ENCODE measurements at regions of chr6 and their contacts with region 1.

Region 1: GRCh38 chr6:150079604-150080003 is 10.7 kb upstream of the ULBP3 start:
- DNase-seq: peak in 8 of 9 donors; percentile 16 to 59 (median 46)
- ATAC-seq: peak; percentile 59
- H3K4me3 ChIP-seq: no peak overlapping the region
- H3K4me3 Mint-ChIP-seq: peak overlapping the region in 9 of 10 donors; percentile 51 to 82 (median 71)
- H3K27ac ChIP-seq: no peak overlapping the region
- H3K27ac Mint-ChIP-seq: peak overlapping the region in 3 of 9 donors; percentile 18 to 83 (median 69)
- H3K4me1 ChIP-seq: peaks cover 7 to 16% of the 10 kb centered on the region in 2 donors
- H3K4me1 Mint-ChIP-seq: peaks cover 9 to 28% (median 23%) of the 10 kb centered on the region in 7 donors
- H3K27me3 ChIP-seq: no peaks in the 10 kb centered on the region
- H3K27me3 Mint-ChIP-seq: peaks cover 11 to 36% (median 17%) of the 10 kb centered on the region in 5 donors

Region 2: GRCh38 chr6:150068720-150069648 is 10.6 kb before region 1 on chr6 and contains the start of gene ULBP3:
- CTCF ChIA-PET with region 1: interaction called, 3 read pairs
- POLR2A ChIA-PET with region 1: no interaction called
- intact Hi-C with region 1: loop called in 1 of 2 experiments (anchors 1 kb)
- DNase-seq: peak; percentile 24 to 75 (median 35)
- ATAC-seq: peak; percentile 83
- H3K4me3 ChIP-seq: peak within 1 kb of the TSS; percentile 77
- H3K4me3 Mint-ChIP-seq: peak within 1 kb of the TSS; percentile 80 to 95 (median 90)
- H3K27ac ChIP-seq: no peak within 1 kb of the TSS
- H3K27ac Mint-ChIP-seq: peak within 1 kb of the TSS in 4 of 9 donors; percentile 49 to 82 (median 72)
- H3K4me1 ChIP-seq: peaks cover 0 to 5% of the 10 kb centered on the region in 2 donors
- H3K4me1 Mint-ChIP-seq: peaks cover 10 to 22% (median 14%) of the 10 kb centered on the region in 7 donors
- H3K27me3 ChIP-seq: no peaks in the 10 kb centered on the region
- H3K27me3 Mint-ChIP-seq: peaks cover 4 to 35% (median 12%) of the 10 kb centered on the region in 5 donors
- total RNA-seq, gene ULBP3: 0.42 to 1.5 TPM in 2 of 5 experiments, not detected in the others

Region 3: GRCh38 chr6:150334790-150335783 is 255.5 kb after region 1 on chr6:
- CTCF ChIA-PET with region 1: no interaction called
- POLR2A ChIA-PET with region 1: no interaction called
- intact Hi-C with region 1: loop called in 1 of 2 experiments (anchors 1 kb)
- DNase-seq: peak in 1 of 9 donors; percentile 11
- ATAC-seq: no peak
- H3K4me3 ChIP-seq: no peak overlapping the region
- H3K4me3 Mint-ChIP-seq: no peak overlapping the region
- H3K27ac ChIP-seq: no peak overlapping the region
- H3K27ac Mint-ChIP-seq: no peak overlapping the region
- H3K4me1 ChIP-seq: no peaks in the 10 kb centered on the region
- H3K4me1 Mint-ChIP-seq: no peaks in the 10 kb centered on the region
- H3K27me3 ChIP-seq: no peaks in the 10 kb centered on the region
- H3K27me3 Mint-ChIP-seq: peaks cover 0 to 22% (median 7%) of the 10 kb centered on the region in 5 donors

Region 4: GRCh38 chr6:150395398-150396009 is 315.9 kb after region 1 on chr6:
- CTCF ChIA-PET with region 1: interaction called, 7 read pairs
- POLR2A ChIA-PET with region 1: no interaction called
- intact Hi-C with region 1: loop called (anchors 1 to 2 kb)
- DNase-seq: peak in 4 of 9 donors; percentile 14 to 27 (median 19)
- ATAC-seq: peak; percentile 66
- H3K4me3 ChIP-seq: no peak overlapping the region
- H3K4me3 Mint-ChIP-seq: no peak overlapping the region
- H3K27ac ChIP-seq: no peak overlapping the region
- H3K27ac Mint-ChIP-seq: no peak overlapping the region
- H3K4me1 ChIP-seq: no peaks in the 10 kb centered on the region
- H3K4me1 Mint-ChIP-seq: peaks cover 0 to 2% (median 0%) of the 10 kb centered on the region in 7 donors
- H3K27me3 ChIP-seq: no peaks in the 10 kb centered on the region
- H3K27me3 Mint-ChIP-seq: peaks cover 0 to 14% (median 11%) of the 10 kb centered on the region in 5 donors

Region 5: GRCh38 chr6:151004415-151005024 is 924.9 kb after region 1 on chr6:
- CTCF ChIA-PET with region 1: no interaction called
- POLR2A ChIA-PET with region 1: no interaction called
- intact Hi-C with region 1: no loop called
- DNase-seq: no peak
- ATAC-seq: peak; percentile 57
- H3K4me3 ChIP-seq: no peak overlapping the region
- H3K4me3 Mint-ChIP-seq: peak overlapping the region in 1 of 10 donors; percentile 21
- H3K27ac ChIP-seq: no peak overlapping the region
- H3K27ac Mint-ChIP-seq: peak overlapping the region in 3 of 9 donors; percentile 12 to 64 (median 30)
- H3K4me1 ChIP-seq: no peaks in the 10 kb centered on the region
- H3K4me1 Mint-ChIP-seq: peaks cover 0 to 32% (median 17%) of the 10 kb centered on the region in 7 donors
- H3K27me3 ChIP-seq: no peaks in the 10 kb centered on the region
- H3K27me3 Mint-ChIP-seq: no peaks in the 10 kb centered on the region